ENCODE measurements at regions of chr4 and their contacts with region 1.

Region 1: DNA sequence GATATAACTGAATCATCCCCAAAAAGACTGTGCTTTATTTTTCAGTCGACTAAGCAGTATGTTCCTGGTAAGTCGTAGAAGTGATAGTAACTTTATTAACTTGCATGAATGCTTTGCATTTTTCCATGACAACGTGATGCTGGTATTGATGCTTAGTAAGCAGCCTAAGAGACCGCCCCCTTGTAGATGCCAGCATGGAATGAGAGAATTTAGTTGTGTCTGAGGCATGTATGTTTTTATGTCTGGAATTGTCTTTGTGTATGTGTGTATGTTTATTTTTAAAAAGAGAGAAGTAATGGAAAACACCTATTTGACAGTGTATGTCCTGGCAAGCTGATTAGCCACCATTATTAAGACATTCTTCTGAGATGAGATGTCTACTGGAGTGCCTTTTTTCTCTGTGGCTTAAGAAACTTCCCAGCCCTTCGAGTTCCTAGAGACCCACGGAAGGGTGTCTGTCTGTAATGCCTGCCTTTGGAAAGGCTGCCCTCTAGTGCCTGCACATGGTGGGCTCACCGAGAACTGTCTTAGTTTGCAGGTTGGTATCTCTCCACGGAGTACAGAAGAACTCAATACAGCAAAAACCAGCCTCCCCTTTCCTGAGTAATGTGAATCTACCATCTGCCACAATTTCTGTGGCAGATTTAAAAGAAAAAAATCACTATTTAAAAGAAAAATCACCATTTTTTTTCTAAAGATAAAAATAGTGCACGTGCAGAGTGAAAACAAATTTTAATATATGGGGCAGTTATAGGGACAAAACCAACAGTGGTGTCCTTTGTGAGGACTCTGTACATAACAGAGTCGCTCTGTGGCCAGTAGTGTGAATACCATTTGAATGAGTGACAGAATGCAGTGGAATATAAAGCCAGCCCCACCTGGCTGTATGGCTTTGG is 85.9 kb downstream of the AASDH start:
- DNase-seq: peak; percentile 84
- H3K4me3 Mint-ChIP-seq: peak overlapping the region; percentile 45
- H3K27ac Mint-ChIP-seq: no peak overlapping the region
- H3K4me1 Mint-ChIP-seq: peaks cover 12% of the 10 kb centered on the region
- H3K27me3 Mint-ChIP-seq: no peaks in the 10 kb centered on the region

Region 2: DNA sequence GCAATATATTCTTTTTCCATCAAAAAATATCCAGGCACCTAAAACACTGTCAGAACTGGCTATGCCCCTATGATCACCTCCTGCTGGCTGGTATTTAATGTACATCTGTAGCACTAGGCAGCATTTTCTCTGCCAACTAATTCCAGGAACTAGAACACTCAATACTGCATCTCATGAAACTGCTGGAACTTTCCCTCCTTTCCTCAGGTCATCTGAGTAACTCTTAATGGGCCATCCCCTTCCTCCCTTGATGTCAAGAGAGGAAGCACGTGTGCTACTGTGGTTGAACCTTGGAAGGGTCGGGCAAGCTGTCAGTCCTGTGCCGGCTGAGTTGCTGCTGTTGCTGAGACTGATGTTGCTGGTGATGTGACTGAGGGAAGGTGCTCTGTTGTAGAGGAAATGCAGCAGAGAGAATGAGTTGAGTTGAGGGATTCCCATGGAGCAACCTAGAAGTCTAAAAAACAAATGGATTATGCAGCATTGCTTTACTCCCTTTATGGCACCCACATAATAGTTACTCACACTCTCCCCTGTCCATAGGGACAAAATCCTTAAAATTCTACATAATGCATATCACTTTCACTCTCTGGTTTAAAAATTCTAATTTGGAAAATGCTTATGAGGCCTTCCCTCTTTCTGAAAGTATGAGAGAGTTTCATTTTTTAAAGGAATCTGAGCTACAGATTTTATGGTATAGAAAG is 866.1 kb before region 1 on chr4:
- CTCF ChIA-PET with region 1: no interaction called
- intact Hi-C with region 1: loop called (anchors 5 kb)
- DNase-seq: peak; percentile 68
- H3K4me3 Mint-ChIP-seq: no peak overlapping the region
- H3K27ac Mint-ChIP-seq: peak overlapping the region; percentile 37
- H3K4me1 Mint-ChIP-seq: peaks cover 16% of the 10 kb centered on the region
- H3K27me3 Mint-ChIP-seq: no peaks in the 10 kb centered on the region

Region 3: GRCh38 chr4:56008206-56008605 is 293.2 kb before region 1 on chr4:
- CTCF ChIA-PET with region 1: no interaction called
- intact Hi-C with region 1: no loop called
- DNase-seq: no peak
- H3K4me3 Mint-ChIP-seq: no peak overlapping the region
- H3K27ac Mint-ChIP-seq: no peak overlapping the region
- H3K4me1 Mint-ChIP-seq: peaks cover 10% of the 10 kb centered on the region
- H3K27me3 Mint-ChIP-seq: no peaks in the 10 kb centered on the region

Region 4: DNA sequence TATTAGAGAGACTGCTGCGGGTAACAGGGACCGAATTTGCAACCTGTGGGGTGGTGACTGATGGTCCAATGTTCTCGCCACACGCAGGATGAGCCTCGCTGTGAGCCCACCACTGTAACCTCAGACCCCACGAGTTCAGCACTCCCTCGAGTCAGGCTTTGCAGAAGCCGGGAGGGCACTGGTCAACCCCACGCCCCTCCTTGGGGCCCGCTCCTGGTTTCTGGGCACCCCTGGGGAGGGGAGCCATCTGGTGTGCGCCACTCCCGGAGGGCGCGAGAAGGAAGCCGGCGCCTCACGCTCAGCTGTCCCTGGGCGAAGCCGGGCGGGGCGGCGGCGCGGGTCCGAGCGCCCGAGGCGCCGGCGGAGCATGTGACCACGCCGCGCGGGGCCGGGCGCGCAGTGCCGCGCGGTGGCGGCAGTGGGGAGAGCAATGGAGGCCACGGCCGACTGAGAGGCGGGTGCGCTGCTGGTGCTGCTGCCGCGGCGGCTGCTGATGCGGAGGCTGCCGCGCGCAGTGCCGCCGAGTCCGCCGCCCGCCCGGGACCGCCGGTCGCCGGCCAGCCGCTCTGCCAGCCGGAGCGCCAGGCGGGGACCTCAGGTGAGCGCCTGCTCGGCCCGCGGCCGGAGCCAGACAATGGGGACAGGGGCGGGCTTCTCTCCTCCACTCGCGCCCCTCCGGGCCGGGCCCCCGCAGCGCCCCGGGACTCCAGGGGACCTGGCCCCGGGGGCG is 252.6 kb before region 1 on chr4:
- CTCF ChIA-PET with region 1: interaction called, 6 read pairs
- intact Hi-C with region 1: loop called (anchors 1 kb)
- DNase-seq: peak; percentile 66
- H3K4me3 Mint-ChIP-seq: peak overlapping the region; percentile 70
- H3K27ac Mint-ChIP-seq: no peak overlapping the region
- H3K4me1 Mint-ChIP-seq: peaks cover 9% of the 10 kb centered on the region
- H3K27me3 Mint-ChIP-seq: peaks cover 46% of the 10 kb centered on the region

Region 5: DNA sequence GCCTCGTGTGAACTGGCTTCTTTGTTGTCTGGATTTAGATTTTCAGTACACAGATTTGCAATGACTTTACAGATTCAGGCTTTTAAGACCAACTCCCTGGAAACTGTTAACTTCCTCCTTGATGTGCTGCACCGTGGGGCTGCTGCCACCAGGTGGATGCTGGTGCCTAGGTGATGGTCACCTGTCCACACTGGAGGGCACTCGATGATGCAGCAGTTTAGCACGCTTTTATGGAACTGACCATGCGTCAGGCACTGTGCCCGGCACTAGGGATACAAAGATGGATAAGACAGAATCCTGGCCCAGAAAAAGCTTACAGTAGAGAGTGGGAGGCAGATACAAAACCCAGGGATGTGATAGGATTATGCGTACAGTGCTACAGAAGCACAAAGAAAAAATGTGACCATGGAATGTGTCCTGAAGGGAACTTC is 172.0 kb before region 1 on chr4:
- CTCF ChIA-PET with region 1: interaction called, 24 read pairs
- intact Hi-C with region 1: loop called (anchors 1 kb)
- DNase-seq: peak; percentile 47
- H3K4me3 Mint-ChIP-seq: no peak overlapping the region
- H3K27ac Mint-ChIP-seq: no peak overlapping the region
- H3K4me1 Mint-ChIP-seq: no peaks in the 10 kb centered on the region
- H3K27me3 Mint-ChIP-seq: peaks cover 2% of the 10 kb centered on the region

Region 6: DNA sequence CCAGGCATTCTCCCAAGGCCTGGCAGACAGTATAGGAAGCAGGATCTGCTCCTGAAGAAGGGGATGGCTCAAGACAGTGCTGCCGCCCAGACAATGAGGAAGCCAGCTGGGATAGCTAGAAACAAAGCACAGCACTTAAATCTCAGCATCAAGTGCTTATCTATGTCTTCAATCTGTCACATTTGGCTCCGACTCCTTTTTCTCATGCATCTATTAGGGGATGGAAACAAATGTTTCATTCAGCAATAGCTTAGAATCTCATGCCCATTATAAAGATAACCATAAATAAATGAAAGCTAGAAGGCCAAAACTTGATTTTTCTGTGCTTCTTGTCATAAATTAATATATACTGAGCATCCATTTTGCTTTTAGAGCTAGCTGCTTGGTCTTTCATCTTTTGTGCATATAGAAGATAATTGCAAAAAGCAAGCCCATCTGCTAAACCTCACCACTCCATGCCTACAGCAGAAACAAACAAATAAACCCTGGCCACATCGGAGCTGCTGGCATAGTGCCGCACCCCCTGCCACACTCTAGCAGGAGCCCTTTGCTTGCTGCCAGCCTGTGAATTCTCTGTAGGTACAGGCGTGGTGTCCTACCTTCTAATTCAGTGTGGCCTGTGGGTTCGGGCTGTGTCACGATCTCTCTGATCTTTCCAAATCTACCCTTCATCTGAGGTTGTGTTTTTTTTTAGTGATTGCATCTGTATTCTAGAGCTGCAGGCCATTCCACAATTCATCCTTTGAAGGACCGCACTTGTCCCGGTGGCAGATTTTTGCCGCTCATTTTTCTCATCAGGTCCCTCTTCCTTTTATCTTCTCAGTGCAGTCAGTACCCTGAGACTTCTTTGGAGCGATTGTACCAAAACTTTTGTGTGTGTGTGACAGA is 10.1 kb after region 1 on chr4:
- CTCF ChIA-PET with region 1: interaction called, 10 read pairs
- intact Hi-C with region 1: no loop called
- DNase-seq: no peak
- H3K4me3 Mint-ChIP-seq: no peak overlapping the region
- H3K27ac Mint-ChIP-seq: no peak overlapping the region
- H3K4me1 Mint-ChIP-seq: no peaks in the 10 kb centered on the region
- H3K27me3 Mint-ChIP-seq: no peaks in the 10 kb centered on the region

Measured in activated naive CD4-positive, alpha-beta T cell treated with anti-CD3 and anti-CD28 coated beads for 36 hours (primary cell).